Thyroid gland (tissue), 4 donors: ENCODE measurements at regions of chr7 and their contacts with region 1.

Region 1: DNA sequence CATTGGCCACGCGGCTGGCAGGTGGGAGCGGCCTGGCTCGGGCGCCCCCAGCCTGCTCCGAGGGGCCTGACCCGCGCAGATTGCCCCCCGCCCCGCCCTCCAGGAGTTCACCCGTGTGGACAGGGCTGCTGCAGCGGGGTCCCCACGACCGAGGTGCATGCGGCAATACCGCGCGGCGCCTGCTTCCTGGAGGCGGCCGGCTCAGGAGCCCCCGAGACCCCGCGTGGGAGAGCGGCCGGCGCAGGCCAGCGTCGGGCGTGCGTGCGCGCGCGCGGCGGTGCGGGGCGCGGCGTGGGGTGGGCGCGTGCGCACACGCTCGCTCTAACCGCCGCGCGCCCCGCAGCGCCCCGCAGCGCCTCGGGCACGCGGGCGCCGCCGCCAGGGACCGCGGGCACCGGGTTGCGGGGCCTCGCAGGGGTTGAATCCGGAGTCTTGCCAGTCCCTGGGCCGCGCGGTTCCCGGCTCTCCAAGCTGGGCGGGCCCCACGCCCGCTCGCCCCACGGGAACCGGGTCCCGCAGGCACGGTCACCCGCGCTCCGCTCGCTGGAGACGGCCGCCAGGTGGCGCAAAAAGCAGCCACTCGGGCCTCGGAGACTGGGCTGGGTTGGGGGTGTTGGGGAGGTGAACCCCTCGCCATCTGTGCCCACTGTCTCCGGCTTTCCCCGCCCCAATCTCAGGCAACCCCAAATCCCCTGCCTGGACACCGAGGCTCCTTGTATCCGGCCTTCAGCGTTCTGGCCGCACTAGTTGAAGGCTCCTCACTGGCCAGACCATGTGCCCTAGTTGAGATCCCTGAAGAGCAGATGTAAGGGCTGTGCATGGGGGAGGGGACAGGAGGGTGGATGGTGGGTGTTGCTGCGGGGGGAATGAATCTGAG is 1.3 kb upstream of the ACHE start:
- DNase-seq: peak; percentile 36 to 58
- H3K4me3 ChIP-seq: peak overlapping the region in 1 of 3 donors; percentile 14
- H3K27ac ChIP-seq: no peak overlapping the region
- H3K4me1 ChIP-seq: peaks cover 15 to 31% of the 10 kb centered on the region in 2 donors
- H3K27me3 ChIP-seq: peaks cover 10% of the 10 kb centered on the region
- CTCF ChIP-seq: peak; percentile 50 to 76 (median 56)
- POLR2A ChIP-seq: no peak

Region 2: GRCh38 chr7:100991631-100992030 is 94.7 kb after region 1 on chr7:
- intact Hi-C with region 1: no loop called
- DNase-seq: no peak
- H3K4me3 ChIP-seq: no peak overlapping the region
- H3K27ac ChIP-seq: no peak overlapping the region
- H3K4me1 ChIP-seq: no peaks in the 10 kb centered on the region
- H3K27me3 ChIP-seq: no peaks in the 10 kb centered on the region
- CTCF ChIP-seq: no peak
- POLR2A ChIP-seq: no peak

Region 3: GRCh38 chr7:101058355-101058754 is 161.4 kb after region 1 on chr7:
- intact Hi-C with region 1: loop called (anchors 2 kb)
- DNase-seq: peak; percentile 64 to 76
- H3K4me3 ChIP-seq: no peak overlapping the region
- H3K27ac ChIP-seq: no peak overlapping the region
- H3K4me1 ChIP-seq: no peaks in the 10 kb centered on the region
- H3K27me3 ChIP-seq: no peaks in the 10 kb centered on the region
- CTCF ChIP-seq: no peak
- POLR2A ChIP-seq: no peak